GM10248 (cell line): ENCODE measurements at regions of chr5 and their contacts with region 1.

Region 1: DNA sequence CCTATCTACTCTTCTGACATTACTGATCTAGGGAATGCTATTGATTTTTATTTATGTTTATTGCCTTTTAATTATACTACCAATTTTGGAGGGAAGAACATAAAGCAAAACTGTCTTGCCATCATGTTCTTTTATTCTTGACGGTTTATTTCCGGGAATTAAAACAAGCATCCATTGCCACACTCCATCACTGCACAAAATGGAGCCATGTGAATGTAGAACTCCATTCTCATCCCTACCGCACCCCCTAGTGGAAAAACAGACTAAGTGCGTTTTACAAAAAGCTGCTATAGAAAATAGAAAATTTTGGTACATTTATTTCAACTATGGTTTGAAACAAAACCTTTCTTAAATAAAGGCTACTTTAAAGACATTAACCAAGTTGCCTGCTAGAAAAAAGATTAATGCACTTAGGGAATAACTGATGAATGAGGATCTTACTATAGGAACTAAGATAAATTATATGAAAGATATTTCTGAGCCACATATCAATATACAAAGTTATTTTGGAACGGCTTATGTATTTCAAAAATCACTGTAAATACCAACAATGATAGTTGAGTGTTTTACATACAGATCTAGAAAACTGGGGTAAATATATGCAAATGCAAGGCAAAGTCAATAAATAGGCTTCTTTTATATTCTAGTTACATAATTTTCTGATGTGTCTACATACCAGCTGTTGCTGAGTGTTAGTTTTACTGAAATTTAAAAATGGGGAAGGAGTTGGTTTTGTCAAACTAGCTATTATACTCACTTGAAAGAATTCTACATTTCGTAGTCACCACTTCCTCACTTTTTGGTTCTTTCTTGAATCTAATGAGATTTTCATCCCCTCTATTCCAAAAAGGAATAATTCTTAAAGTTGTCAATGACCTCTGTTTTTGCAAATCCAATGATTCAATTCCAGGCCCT is 26.5 kb downstream of the OXCT1 start:
- DNase-seq: no peak
- CTCF ChIP-seq: peak; percentile 71

Region 2: GRCh38 chr5:41695920-41696582 is 147.7 kb before region 1 on chr5:
- CTCF ChIA-PET with region 1: interaction called, 36 read pairs
- POLR2A ChIA-PET with region 1: no interaction called
- DNase-seq: no peak
- CTCF ChIP-seq: peak; percentile 37

Region 3: DNA sequence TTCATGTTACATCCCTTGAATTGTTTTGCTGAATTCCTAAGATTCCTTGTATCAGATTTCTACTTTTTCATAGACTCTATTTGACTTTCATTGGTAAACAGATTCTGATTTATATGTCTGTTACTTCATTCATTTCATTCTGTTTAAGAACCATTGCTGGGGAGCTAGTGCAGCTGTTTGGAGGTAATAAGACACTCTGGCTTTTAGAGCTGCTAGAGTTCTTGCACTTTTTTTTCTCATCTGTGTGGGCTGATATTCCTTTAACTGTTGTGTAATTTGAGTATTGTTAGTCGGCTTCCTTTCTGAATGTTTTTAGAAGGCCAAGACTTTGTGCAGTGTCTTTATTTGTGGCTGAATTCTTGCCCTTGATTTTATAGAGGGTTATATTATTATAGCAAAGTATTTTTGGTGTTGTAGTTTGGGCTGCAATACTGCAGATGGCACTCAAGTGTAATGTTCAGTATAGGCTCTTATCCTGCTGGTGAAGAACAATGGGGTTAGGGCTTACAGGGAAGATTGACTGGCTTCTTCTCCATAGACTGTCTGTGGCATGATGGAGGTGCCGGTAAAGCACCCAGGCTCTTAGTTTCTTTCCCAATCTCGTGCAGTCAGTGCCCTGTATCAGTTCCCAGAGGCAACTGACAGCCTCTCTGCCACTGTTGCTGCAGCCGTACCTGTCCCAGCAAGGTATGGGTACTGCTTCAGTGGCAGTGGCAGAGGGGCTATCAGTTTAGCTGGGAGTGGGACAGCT is 135.7 kb before region 1 on chr5:
- CTCF ChIA-PET with region 1: interaction called, 34 read pairs
- POLR2A ChIA-PET with region 1: no interaction called
- DNase-seq: peak; percentile 34
- CTCF ChIP-seq: peak; percentile 53

Region 4: DNA sequence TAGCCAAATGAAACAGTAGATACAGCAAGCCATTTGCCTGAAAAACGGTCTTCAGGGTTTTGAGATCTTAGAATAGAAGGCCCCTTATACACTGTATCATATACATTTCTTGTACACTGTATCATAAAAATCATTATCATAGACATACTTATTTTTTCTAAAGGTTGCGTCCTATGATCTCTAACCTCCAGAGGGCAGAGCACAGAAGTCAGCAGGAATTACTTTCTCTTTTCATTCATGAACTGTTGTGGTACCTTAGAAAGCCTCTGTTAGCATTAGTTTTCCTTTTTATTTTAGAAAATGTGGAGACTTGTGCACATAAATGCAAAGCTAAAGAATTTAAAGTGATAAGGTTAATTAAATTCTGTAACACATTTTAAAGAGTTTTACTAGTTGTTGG is 88.9 kb before region 1 on chr5:
- CTCF ChIA-PET with region 1: interaction called, 10 read pairs
- POLR2A ChIA-PET with region 1: no interaction called
- DNase-seq: no peak
- CTCF ChIP-seq: no peak

Region 5: DNA sequence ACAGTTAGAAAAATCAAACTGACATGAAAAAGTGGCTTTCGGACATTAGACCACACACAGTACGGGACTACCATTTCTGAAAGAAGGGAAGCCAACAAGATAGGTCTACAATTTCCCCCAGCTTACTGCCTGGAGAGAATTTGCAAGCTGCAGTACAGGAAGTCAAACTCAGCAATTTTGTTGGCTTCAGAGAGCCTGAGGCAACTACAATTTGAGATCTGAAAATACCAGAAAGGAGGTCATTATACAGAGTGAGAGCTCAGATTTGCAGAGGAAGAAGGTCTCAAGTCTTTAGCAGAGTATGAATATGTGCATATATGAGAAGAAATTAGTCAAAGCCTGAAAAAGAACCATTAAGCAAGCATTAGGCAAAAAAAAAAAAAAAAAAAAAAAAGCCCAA is 56.4 kb before region 1 on chr5:
- CTCF ChIA-PET with region 1: no interaction called
- POLR2A ChIA-PET with region 1: no interaction called
- DNase-seq: no peak
- CTCF ChIP-seq: no peak

Region 6: GRCh38 chr5:41822036-41822435 is 21.7 kb before region 1 on chr5:
- CTCF ChIA-PET with region 1: interaction called, 14 read pairs
- POLR2A ChIA-PET with region 1: no interaction called
- DNase-seq: no peak
- CTCF ChIP-seq: no peak

Region 7: GRCh38 chr5:41856644-41857491 is 13.2 kb after region 1 on chr5:
- CTCF ChIA-PET with region 1: interaction called, 23 read pairs
- POLR2A ChIA-PET with region 1: no interaction called
- DNase-seq: peak; percentile 54
- CTCF ChIP-seq: peak; percentile 82

Region 8: GRCh38 chr5:41893074-41893851 is 49.5 kb after region 1 on chr5:
- CTCF ChIA-PET with region 1: no interaction called
- POLR2A ChIA-PET with region 1: no interaction called
- DNase-seq: peak; percentile 15
- CTCF ChIP-seq: no peak